ENCODE measurements at regions of chr16 and their contacts with region 1.

Region 1: GRCh38 chr16:70534971-70535370 is 11.4 kb downstream of the SF3B3 start:
- DNase-seq: no peak
- ATAC-seq: no peak
- H3K4me3 Mint-ChIP-seq: no peak overlapping the region
- H3K27ac Mint-ChIP-seq: no peak overlapping the region
- H3K4me1 Mint-ChIP-seq: peaks cover 33% of the 10 kb centered on the region
- H3K27me3 Mint-ChIP-seq: no peaks in the 10 kb centered on the region

Region 2: DNA sequence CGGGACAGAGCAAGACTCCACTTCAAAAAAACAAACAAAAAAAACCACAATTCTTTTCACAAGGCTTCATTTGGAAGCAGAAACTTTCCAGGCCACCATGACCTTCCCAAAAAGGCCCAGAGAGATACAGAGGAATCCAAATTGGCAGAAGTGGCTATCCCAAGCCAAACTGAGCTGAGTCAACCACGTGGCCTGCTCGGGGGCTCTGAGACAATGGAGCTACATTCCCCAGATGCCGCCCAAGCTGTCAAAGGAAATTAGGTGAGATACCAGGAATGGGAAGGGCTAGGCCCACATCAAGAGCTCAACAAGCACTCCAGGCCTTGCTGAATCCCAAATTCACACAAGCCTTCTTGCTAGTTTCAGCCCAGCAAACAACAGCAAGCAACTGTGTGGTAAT is 277.6 kb before region 1 on chr16:
- CTCF ChIA-PET with region 1: no interaction called
- POLR2A ChIA-PET with region 1: no interaction called
- intact Hi-C with region 1: loop called in 1 of 2 experiments (anchors 5 kb)
- DNase-seq: no peak
- ATAC-seq: no peak
- H3K4me3 Mint-ChIP-seq: no peak overlapping the region
- H3K27ac Mint-ChIP-seq: no peak overlapping the region
- H3K4me1 Mint-ChIP-seq: no peaks in the 10 kb centered on the region
- H3K27me3 Mint-ChIP-seq: no peaks in the 10 kb centered on the region

Region 3: DNA sequence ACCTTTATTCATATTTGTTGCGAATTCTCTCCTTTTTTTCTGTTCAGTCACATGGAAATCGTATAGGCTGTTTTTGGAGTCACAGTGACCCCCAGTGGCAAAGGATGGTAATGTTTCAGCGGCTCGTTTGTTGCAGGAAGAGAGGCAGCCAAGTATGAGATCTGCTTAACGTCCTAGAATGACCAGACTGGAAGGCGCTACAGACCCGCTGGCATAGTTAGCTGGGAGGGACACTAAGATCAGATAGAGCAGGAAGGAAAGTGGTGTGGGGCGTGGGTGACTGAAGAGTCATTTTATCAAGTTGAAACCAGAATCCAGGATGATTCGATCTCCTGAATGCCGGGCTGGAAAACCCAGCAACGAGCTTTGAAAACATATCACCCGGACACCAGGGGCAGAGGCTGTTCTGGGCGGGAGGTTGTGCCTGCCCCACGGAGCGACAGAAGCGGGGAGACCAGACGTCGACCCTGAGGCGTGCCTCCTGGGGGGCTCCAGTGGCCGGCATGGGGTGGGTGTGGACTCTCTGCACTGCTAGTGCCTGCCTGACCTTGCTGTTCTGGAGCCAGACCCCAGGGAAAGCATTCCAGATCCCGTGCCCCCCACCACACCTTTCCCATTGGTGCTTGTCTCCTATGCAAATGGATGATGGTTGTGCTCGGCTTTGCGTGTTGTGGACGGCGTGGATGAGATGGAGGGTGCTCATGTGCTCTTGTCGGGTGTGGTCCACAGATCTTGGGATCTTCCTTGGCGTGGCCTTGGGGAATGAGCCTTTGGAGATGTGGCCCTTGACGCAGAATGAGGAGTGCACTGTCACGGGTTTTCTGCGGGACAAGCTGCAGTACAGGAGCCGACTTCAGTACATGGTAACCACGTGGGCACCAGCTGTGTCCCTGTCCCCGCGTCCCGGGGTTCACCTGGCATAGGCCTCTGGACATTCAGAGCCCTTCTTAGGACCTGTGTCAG is 119.1 kb after region 1 on chr16:
- CTCF ChIA-PET with region 1: no interaction called
- POLR2A ChIA-PET with region 1: no interaction called
- intact Hi-C with region 1: no loop called
- DNase-seq: peak; percentile 88
- ATAC-seq: peak; percentile 86
- H3K4me3 Mint-ChIP-seq: no peak overlapping the region
- H3K27ac Mint-ChIP-seq: no peak overlapping the region
- H3K4me1 Mint-ChIP-seq: peaks cover 4% of the 10 kb centered on the region
- H3K27me3 Mint-ChIP-seq: no peaks in the 10 kb centered on the region

Region 4: DNA sequence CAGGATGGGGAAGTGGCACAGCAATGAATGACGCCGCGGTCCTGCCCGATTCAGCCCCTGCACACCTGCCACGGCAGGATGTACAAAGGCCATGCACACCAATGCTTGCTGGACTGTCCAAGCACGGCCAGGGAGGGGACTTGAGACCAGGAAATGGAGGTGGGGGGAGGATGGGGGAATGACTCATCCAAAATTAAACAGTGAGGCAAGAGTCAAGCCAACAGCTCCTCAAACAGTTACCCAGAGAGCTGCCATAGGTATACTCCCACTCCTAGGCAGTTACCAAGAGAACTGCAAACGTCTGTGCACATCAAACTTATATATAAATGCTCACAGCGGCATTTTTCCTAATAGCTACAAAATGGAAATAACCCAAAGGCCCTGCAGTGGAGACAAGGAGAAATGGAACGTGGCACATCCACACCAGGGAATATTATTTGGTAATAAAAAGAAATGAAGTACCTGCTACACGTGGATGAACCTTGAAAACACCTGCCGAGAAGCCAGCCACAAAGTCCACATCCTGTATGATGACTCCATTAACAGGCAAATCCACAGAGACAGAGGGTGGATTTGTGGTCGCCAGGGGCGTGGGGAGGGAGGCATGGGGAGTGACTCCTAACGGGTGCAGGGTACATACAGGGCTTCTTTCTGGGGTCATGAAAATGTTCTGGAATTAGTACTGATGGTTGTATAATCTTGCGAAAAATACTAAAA is 211.9 kb after region 1 on chr16:
- CTCF ChIA-PET with region 1: no interaction called
- POLR2A ChIA-PET with region 1: no interaction called
- intact Hi-C with region 1: no loop called
- DNase-seq: peak; percentile 77
- ATAC-seq: peak; percentile 73
- H3K4me3 Mint-ChIP-seq: no peak overlapping the region
- H3K27ac Mint-ChIP-seq: peak overlapping the region; percentile 88
- H3K4me1 Mint-ChIP-seq: peaks cover 47% of the 10 kb centered on the region
- H3K27me3 Mint-ChIP-seq: no peaks in the 10 kb centered on the region

Measured in activated CD4-positive, alpha-beta T cell treated with anti-CD3 and anti-CD28 coated beads for 36 hours (primary cell).